GM12878 (cell line): ENCODE measurements at regions of chr15 and their contacts with region 1.

Region 1: DNA sequence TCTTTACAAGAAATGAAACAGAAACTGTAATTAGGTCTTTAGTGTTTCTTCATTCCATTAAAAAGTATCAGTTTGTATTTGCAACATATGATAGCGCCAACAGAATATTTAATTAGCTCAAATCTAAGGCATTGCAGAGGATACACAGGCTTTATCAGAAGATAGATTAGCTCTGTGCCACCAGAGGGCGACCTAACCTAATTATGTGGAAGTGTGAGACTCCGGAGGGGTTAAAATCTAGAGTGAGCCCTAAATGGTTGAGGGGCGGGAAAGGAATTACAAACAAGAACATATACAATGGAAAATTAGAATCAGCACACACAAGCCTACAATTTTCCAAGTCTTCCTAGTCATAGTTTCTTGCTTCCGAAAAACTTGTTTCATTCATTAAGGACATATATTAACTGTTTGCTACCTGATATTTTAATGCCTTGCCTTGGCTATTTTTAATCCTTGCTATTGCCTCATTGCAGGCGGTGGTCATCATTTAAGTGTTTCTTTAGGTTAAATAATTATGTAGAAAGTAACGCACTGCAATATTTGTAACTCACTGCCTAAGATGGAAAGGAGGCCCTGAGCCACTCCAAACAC is 18.0 kb upstream of the RYR3 start:
- DNase-seq: no peak
- ATAC-seq: peak; percentile 87
- H3K4me3 ChIP-seq: no peak overlapping the region
- H3K27ac ChIP-seq: no peak overlapping the region
- H3K4me1 ChIP-seq: no peaks in the 10 kb centered on the region
- H3K27me3 ChIP-seq: no peaks in the 10 kb centered on the region; a peak in 1 of 4 replicates
- CTCF ChIP-seq: peak; percentile 60 to 73 (median 67); a peak in 5 of 6 replicates
- EP300 ChIP-seq: no peak
- POLR2A ChIP-seq: no peak
- RAD21 ChIP-seq: peak; percentile 87

Region 2: DNA sequence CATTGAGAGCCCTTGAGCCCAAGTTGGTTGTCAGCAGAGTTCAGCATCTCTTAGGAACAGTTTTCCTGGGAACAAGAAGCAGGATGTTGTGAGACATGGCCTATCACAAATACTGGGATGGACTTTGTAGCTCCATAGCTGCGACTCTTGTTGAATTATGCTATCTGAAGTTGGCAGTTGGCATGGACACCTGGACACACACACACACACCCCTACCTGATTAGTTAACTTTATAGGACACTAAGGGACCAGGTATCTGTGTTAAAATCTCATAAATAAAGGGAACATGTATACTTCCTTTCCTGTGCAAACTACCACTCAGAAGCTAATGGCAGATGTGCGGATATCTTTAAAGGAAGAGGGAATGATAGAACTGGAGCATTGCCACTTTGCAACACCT is 1272.7 kb before region 1 on chr15:
- CTCF ChIA-PET with region 1: no interaction called
- POLR2A ChIA-PET with region 1: no interaction called
- RAD21 ChIA-PET with region 1: no interaction called
- SMC1A ChIA-PET with region 1: no interaction called
- in situ Hi-C with region 1: no loop called
- intact Hi-C with region 1: no loop called
- DNase-seq: no peak
- ATAC-seq: no peak
- H3K4me3 ChIP-seq: no peak overlapping the region
- H3K27ac ChIP-seq: no peak overlapping the region
- H3K4me1 ChIP-seq: no peaks in the 10 kb centered on the region
- H3K27me3 ChIP-seq: no peaks in the 10 kb centered on the region
- CTCF ChIP-seq: no peak
- EP300 ChIP-seq: no peak
- POLR2A ChIP-seq: no peak
- RAD21 ChIP-seq: no peak

Region 3: DNA sequence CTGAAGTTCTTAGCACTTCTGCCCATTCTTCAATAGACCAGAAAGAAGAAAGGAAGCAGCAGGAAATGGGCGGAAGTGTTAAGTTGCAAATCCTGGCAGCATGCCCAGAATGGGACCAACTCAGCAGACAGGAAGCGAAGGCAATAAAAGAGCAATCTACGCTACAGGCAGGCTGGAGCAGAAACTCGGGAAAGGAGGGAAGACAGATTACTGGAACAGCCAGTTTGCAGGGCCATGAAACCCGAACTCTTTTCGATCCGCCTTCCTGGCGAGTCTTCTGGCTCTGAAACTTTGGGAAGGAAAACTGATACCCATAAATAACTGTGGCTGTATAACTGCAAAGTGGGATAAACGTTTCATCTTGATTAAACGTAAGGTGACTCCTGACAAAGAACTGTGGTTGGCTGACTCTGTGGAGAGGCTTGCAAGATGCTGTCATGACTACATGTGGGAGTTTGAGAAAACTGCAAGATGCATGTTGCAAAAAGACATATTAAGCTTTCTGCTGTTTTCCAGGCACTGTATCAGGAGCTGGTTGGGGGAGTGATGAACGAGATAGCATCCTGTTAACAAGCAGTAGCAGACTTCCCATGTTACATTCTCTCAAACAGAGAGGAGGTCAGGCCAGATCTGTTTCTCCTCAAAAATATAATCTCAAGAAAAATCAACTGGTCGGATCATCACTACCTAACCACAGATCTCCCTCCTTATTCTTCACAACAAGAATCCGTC is 166.1 kb before region 1 on chr15:
- CTCF ChIA-PET with region 1: no interaction called
- POLR2A ChIA-PET with region 1: no interaction called
- RAD21 ChIA-PET with region 1: no interaction called
- SMC1A ChIA-PET with region 1: no interaction called
- in situ Hi-C with region 1: no loop called
- intact Hi-C with region 1: no loop called
- DNase-seq: no peak
- ATAC-seq: no peak
- H3K4me3 ChIP-seq: no peak overlapping the region
- H3K27ac ChIP-seq: no peak overlapping the region
- H3K4me1 ChIP-seq: no peaks in the 10 kb centered on the region
- H3K27me3 ChIP-seq: no peaks in the 10 kb centered on the region
- CTCF ChIP-seq: no peak
- EP300 ChIP-seq: no peak
- POLR2A ChIP-seq: no peak
- RAD21 ChIP-seq: no peak

Region 4: GRCh38 chr15:33309602-33310276 is 16.9 kb after region 1 on chr15:
- CTCF ChIA-PET with region 1: interaction called, 17 read pairs
- POLR2A ChIA-PET with region 1: no interaction called
- RAD21 ChIA-PET with region 1: interaction called, 8 read pairs
- SMC1A ChIA-PET with region 1: interaction called, 7 read pairs
- in situ Hi-C with region 1: no loop called
- intact Hi-C with region 1: no loop called
- DNase-seq: no peak
- ATAC-seq: peak; percentile 76
- H3K4me3 ChIP-seq: no peak overlapping the region
- H3K27ac ChIP-seq: no peak overlapping the region
- H3K4me1 ChIP-seq: no peaks in the 10 kb centered on the region
- H3K27me3 ChIP-seq: peaks cover 0 to 8% of the 10 kb centered on the region in 2 experiments
- CTCF ChIP-seq: peak; percentile 15 to 44 (median 29); a peak in 4 of 6 replicates
- EP300 ChIP-seq: no peak
- POLR2A ChIP-seq: no peak
- RAD21 ChIP-seq: no peak

Region 5: GRCh38 chr15:33476076-33476475 is 183.3 kb after region 1 on chr15:
- CTCF ChIA-PET with region 1: no interaction called
- POLR2A ChIA-PET with region 1: no interaction called
- RAD21 ChIA-PET with region 1: no interaction called
- SMC1A ChIA-PET with region 1: no interaction called
- in situ Hi-C with region 1: no loop called
- intact Hi-C with region 1: no loop called
- DNase-seq: no peak
- ATAC-seq: no peak
- H3K4me3 ChIP-seq: no peak overlapping the region
- H3K27ac ChIP-seq: no peak overlapping the region
- H3K4me1 ChIP-seq: no peaks in the 10 kb centered on the region
- H3K27me3 ChIP-seq: no peaks in the 10 kb centered on the region
- CTCF ChIP-seq: no peak
- EP300 ChIP-seq: no peak
- POLR2A ChIP-seq: no peak
- RAD21 ChIP-seq: no peak

Region 6: GRCh38 chr15:33675246-33675645 is 382.4 kb after region 1 on chr15:
- CTCF ChIA-PET with region 1: interaction called, 32 read pairs
- POLR2A ChIA-PET with region 1: no interaction called
- RAD21 ChIA-PET with region 1: interaction called, 7 read pairs
- SMC1A ChIA-PET with region 1: interaction called, 6 read pairs
- in situ Hi-C with region 1: no loop called
- intact Hi-C with region 1: loop called (anchors 1 kb)
- DNase-seq: no peak
- ATAC-seq: peak; percentile 81
- H3K4me3 ChIP-seq: no peak overlapping the region
- H3K27ac ChIP-seq: no peak overlapping the region
- H3K4me1 ChIP-seq: peaks cover 14% of the 10 kb centered on the region; the same call in 1 of the 2 replicates
- H3K27me3 ChIP-seq: no peaks in the 10 kb centered on the region; a peak in 3 of 4 replicates
- CTCF ChIP-seq: peak; percentile 54 to 63 (median 56)
- EP300 ChIP-seq: no peak
- POLR2A ChIP-seq: no peak
- RAD21 ChIP-seq: peak; percentile 66

Region 7: DNA sequence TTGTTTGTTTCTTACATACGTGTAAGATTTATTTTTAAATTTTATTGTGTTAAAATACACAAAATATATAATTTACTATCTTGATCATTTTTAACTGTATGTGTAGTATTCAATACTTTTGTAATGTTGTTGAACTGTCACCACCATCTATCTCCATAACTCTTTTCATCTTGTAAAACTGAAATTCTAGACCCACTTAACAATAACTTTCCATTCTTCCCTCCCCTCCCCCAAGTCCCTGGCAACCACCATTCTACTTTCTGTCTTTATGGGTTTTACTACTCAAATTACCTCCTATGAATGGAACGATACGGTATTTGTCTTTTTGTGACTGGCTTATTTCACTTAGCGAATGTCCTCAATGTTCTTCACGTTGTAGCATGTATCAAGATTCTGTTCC is 413.4 kb after region 1 on chr15:
- CTCF ChIA-PET with region 1: interaction called, 153 read pairs
- POLR2A ChIA-PET with region 1: no interaction called
- RAD21 ChIA-PET with region 1: interaction called, 93 read pairs
- SMC1A ChIA-PET with region 1: interaction called, 63 read pairs
- in situ Hi-C with region 1: no loop called
- intact Hi-C with region 1: no loop called
- DNase-seq: no peak
- ATAC-seq: no peak
- H3K4me3 ChIP-seq: no peak overlapping the region
- H3K27ac ChIP-seq: no peak overlapping the region
- H3K4me1 ChIP-seq: no peaks in the 10 kb centered on the region
- H3K27me3 ChIP-seq: no peaks in the 10 kb centered on the region
- CTCF ChIP-seq: no peak
- EP300 ChIP-seq: no peak
- POLR2A ChIP-seq: no peak
- RAD21 ChIP-seq: no peak

Region 8: DNA sequence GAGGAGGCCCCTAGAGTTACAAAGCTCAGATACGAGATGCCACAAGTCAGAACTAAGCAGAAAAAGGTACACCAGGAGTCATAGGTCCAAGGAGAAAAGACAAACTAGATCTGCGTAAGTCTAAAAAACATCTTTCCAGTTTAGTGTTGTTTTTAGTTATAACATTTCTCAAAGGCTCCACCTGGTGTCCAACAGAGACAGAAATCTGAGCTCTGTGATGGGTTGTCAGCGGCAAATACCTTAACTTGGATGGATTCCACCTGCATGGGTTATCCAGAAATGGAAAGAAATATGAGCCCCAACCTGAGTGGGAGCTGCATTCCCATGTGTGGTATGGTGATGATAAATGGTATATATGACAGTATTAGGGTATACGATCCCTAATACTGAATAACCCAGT is 436.8 kb after region 1 on chr15:
- CTCF ChIA-PET with region 1: interaction called, 62 read pairs
- POLR2A ChIA-PET with region 1: no interaction called
- RAD21 ChIA-PET with region 1: interaction called, 9 read pairs
- SMC1A ChIA-PET with region 1: interaction called, 6 read pairs
- in situ Hi-C with region 1: no loop called
- intact Hi-C with region 1: no loop called
- DNase-seq: no peak
- ATAC-seq: no peak
- H3K4me3 ChIP-seq: no peak overlapping the region
- H3K27ac ChIP-seq: no peak overlapping the region
- H3K4me1 ChIP-seq: no peaks in the 10 kb centered on the region
- H3K27me3 ChIP-seq: no peaks in the 10 kb centered on the region
- CTCF ChIP-seq: peak in 1 of 3 experiments; percentile 10; a peak in 1 of 6 replicates
- EP300 ChIP-seq: no peak
- POLR2A ChIP-seq: no peak
- RAD21 ChIP-seq: peak; percentile 24; the same call in 1 of the 2 replicates

Region 9: GRCh38 chr15:33737687-33738601 is 445.1 kb after region 1 on chr15:
- CTCF ChIA-PET with region 1: interaction called, 62 read pairs
- POLR2A ChIA-PET with region 1: no interaction called
- RAD21 ChIA-PET with region 1: interaction called, 9 read pairs
- SMC1A ChIA-PET with region 1: interaction called, 8 read pairs
- in situ Hi-C with region 1: no loop called
- intact Hi-C with region 1: no loop called
- DNase-seq: no peak
- ATAC-seq: peak; percentile 73
- H3K4me3 ChIP-seq: no peak overlapping the region
- H3K27ac ChIP-seq: no peak overlapping the region
- H3K4me1 ChIP-seq: no peaks in the 10 kb centered on the region
- H3K27me3 ChIP-seq: no peaks in the 10 kb centered on the region
- CTCF ChIP-seq: peak; percentile 63 to 84 (median 84)
- EP300 ChIP-seq: no peak
- POLR2A ChIP-seq: no peak
- RAD21 ChIP-seq: peak; percentile 37